ENCODE measurements at regions of chr9 and their contacts with region 1.

Region 1: GRCh38 chr9:37859043-37859442 is 44.9 kb downstream of the SLC25A51 start:
- DNase-seq: no peak
- H3K4me3 ChIP-seq: no peak overlapping the region
- H3K27ac ChIP-seq: no peak overlapping the region
- H3K4me1 ChIP-seq: no peaks in the 10 kb centered on the region
- H3K27me3 ChIP-seq: no peaks in the 10 kb centered on the region
- CTCF ChIP-seq: no peak; the same call in 1 of the 2 replicates

Region 2: DNA sequence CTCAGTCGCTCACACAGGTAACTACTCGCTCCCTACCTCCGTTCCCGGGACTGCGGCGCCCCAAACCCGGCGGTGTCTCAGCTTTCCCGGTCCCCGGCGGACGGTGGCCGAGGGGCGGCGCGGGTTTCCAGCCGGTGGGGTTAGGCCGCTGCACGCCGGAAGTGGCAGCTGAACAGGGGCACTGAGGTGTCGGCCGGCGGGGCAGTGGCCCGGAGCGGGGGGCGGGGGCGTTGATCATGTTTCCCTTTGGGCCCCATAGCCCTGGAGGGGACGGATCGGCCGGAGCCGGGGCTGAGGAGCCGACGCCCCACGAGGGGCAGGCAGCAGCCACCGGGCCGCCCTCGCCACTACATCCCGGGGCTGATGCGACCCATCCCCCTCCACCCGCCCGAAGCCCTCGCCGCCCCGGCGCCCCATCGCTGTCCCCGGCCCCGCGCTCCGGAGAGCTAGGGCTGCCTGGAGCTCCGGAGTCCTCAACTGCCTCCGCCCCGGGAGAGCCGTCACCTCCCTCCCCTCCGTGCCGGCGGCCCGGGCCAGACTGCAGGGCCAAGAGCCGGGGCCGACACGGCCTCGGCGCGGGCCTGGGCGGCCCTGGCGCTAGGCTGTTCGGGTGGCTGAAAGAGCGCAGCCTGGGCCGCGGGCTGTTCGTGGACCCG is 58.3 kb before region 1 on chr9 and contains the start of gene DCAF10:
- CTCF ChIA-PET with region 1: no interaction called
- POLR2A ChIA-PET with region 1: interaction called, 16 read pairs
- intact Hi-C with region 1: no loop called
- DNase-seq: peak; percentile 88
- H3K4me3 ChIP-seq: peak within 1 kb of the TSS; percentile 92
- H3K27ac ChIP-seq: peak within 1 kb of the TSS; percentile 66
- H3K4me1 ChIP-seq: peaks cover 12% of the 10 kb centered on the region
- H3K27me3 ChIP-seq: no peaks in the 10 kb centered on the region
- CTCF ChIP-seq: no peak
- total RNA-seq, gene DCAF10: 24.0 and 29.9 TPM in 2 replicates

Measured in A673 (cell line).